Activated B cell treated with CpG ODN at 0.5 μM for 24 hours (primary cell): ENCODE measurements at regions of chr5 and their contacts with region 1.

Region 1: DNA sequence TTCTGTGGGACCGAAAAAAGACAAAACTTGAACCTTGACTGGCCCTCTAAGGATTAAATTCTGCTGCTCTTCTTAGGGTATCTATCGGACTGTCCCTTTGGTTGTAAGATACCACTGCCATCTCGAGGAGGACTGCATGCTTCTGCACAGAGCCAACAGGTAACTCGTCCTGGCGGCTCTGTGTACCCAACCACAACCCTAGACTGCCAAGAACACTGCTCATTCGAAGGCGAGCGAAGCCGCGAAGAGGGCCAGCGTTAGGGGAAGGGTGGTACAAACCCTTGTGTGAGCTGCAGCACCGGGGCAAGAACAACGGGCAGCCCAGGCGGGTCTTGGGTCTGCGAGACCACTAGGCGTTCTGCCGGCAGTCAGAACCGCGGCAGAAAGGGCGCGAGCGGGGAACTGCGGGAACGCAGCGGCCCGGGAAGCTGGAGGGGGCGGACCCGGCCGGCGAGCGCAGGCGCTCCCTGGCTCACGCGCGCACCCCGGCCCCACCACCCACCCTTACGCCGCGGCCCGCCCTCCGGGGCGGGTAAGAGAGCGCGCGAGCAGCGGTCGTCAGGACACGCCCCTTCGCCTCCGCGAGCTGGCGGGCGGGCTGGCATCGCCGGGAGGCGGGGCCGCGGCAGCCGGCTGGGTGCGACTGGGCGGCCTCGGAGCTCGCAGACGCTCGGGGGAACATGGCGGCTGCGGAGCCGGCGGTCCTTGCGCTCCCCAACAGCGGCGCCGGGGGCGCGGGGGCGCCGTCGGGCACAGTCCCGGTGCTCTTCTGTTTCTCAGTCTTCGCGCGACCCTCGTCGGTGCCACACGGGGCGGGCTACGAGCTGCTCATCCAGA is at the start of gene ISOC1:
- DNase-seq: peak; percentile 89
- ATAC-seq: peak; percentile 94
- H3K4me3 Mint-ChIP-seq: peak within 1 kb of the TSS; percentile 90
- H3K27ac Mint-ChIP-seq: peak within 1 kb of the TSS; percentile 79
- H3K4me1 Mint-ChIP-seq: peaks cover 15% of the 10 kb centered on the region
- H3K27me3 Mint-ChIP-seq: peaks cover 13% of the 10 kb centered on the region
- CTCF ChIP-seq: no peak
- total RNA-seq, gene ISOC1: 9.9 and 10.7 TPM in 2 replicates

Region 2: DNA sequence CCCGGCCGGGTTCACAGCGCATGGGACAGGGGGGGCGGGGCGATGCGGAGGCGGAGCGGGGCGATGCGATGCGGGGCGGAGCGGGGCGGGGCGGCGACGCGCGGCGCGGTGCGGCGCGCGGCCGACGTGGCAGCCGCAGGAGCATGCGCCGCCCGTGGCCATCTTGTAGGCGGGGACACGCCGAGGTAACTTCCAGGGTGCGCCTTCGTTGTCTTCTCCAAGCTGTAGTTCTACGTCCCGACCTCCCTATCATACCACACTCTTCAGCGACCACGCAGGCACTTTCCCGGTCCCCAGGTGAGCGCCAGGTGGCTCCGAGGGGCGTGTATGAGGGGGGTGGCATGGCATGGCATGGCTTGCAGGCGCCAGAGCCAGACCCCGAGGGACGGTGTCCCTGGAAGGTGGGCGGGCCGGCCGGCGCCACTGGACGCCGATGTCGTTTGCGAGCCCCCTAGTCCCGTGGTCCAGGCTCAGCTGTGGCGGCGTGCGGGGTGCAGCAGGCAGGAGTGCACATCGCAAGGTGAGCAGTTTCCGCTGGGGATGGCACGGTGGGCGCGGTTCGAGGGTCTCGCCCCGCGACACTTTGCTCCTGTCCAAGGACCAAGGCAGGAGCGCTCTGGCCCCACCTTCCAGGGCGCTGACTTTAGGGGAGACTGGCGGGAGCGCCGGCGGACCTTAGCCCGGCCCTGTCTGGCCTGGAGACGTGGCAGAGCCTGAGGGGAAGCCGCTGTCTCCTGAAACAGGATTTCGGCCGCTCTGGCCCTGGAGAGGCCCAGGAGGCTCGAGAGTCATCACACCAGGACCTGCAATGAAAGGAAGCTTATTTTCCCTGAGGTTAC is 1576.6 kb before region 1 on chr5 and contains the start of gene PRRC1:
- CTCF ChIA-PET with region 1: no interaction called
- POLR2A ChIA-PET with region 1: no interaction called
- intact Hi-C with region 1: loop called (anchors 5 kb)
- DNase-seq: peak; percentile 66
- ATAC-seq: peak; percentile 97
- H3K4me3 Mint-ChIP-seq: peak within 1 kb of the TSS; percentile 88
- H3K27ac Mint-ChIP-seq: peak within 1 kb of the TSS; percentile 68
- H3K4me1 Mint-ChIP-seq: peaks cover 27% of the 10 kb centered on the region
- H3K27me3 Mint-ChIP-seq: peaks cover 3% of the 10 kb centered on the region
- CTCF ChIP-seq: no peak
- total RNA-seq, gene PRRC1: 33.6 and 34.7 TPM in 2 replicates

Region 3: DNA sequence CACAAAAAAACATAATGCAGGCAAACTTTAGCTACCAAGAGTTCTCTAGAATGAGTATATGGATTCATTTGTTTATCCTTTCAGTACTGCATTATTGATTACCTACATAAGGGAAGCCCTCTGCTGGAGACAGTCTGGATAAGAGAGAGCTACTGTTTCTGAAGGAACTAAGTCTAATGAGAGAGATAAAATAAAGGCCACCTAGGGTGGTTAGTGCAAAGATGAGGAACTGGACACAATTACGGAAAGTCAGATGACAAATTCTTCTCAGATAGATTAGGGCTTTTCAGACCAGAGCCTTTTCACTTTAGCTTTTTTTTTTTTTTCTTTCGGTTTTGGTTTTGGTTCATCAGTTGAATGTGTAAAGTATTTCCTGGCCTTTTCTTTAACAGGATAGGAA is 31.5 kb after region 1 on chr5:
- CTCF ChIA-PET with region 1: interaction called, 3 read pairs
- POLR2A ChIA-PET with region 1: interaction called, 3 read pairs
- intact Hi-C with region 1: loop called (anchors 1 kb)
- DNase-seq: no peak
- ATAC-seq: peak; percentile 45
- H3K4me3 Mint-ChIP-seq: no peak overlapping the region
- H3K27ac Mint-ChIP-seq: peak overlapping the region; percentile 66
- H3K4me1 Mint-ChIP-seq: peaks cover 20% of the 10 kb centered on the region
- H3K27me3 Mint-ChIP-seq: no peaks in the 10 kb centered on the region
- CTCF ChIP-seq: no peak